K562 (cell line): ENCODE measurements at regions of chr1 and their contacts with region 1.

Region 1: GRCh38 chr1:33025181-33025571 is 11.5 kb downstream of the AK2 start:
- DNase-seq: no peak
- ATAC-seq: no peak
- H3K4me3 ChIP-seq: no peak overlapping the region
- H3K27ac ChIP-seq: no peak overlapping the region
- H3K4me1 ChIP-seq: peaks cover 11 to 19% of the 10 kb centered on the region in 2 experiments
- H3K27me3 ChIP-seq: no peaks in the 10 kb centered on the region
- CTCF ChIP-seq: no peak
- EP300 ChIP-seq: no peak
- POLR2A ChIP-seq: no peak; the same call in 1 of the 2 replicates
- RAD21 ChIP-seq: no peak

Region 2: DNA sequence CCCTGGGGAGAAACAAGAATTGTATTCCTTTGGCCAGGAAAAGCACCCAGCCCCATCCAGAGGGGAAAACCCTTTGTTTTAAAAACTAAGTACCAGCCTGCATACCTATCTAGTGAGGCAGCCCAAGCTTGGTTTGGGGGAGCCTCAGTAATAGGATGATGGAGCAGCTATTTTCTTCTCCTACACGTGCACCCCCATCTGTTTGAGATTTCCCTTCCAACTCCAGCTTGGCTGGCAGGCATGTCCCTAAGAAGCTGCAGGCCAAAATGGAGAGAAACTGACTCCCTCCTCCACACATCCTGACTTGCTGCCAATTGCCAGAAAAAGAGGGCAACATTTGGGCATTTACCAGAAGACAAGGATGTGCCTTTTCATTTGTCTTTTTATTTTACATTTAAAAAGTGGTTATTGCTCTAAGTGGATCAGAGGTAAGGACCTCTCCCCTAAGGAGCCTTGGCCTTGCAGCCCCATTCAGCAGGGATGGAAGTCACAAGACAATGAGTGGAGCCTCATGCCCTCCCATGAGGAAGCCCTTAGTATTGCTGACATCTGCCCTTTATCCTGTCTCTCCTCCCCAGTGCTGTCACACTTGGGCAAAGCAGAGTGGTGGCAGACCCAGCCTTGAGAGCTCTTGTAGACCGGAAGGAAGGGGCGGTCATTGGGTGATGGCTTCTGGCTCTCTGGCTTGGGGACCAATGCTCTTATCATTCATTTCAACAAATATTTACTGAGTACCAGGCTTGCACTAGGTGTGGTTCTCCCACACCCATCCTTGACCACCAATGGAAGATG is 163.1 kb before region 1 on chr1:
- CTCF ChIA-PET with region 1: no interaction called
- POLR2A ChIA-PET with region 1: no interaction called
- in situ Hi-C with region 1: no loop called
- intact Hi-C with region 1: no loop called
- DNase-seq: no peak
- ATAC-seq: no peak
- H3K4me3 ChIP-seq: no peak overlapping the region
- H3K27ac ChIP-seq: no peak overlapping the region
- H3K4me1 ChIP-seq: peaks cover 0 to 3% of the 10 kb centered on the region in 2 experiments; a peak in 1 of 5 replicates
- H3K27me3 ChIP-seq: no peaks in the 10 kb centered on the region
- CTCF ChIP-seq: no peak
- EP300 ChIP-seq: no peak
- POLR2A ChIP-seq: no peak
- RAD21 ChIP-seq: no peak

Region 3: GRCh38 chr1:33014464-33015163 is 10.6 kb before region 1 on chr1:
- CTCF ChIA-PET with region 1: no interaction called
- POLR2A ChIA-PET with region 1: interaction called, 28 read pairs
- in situ Hi-C with region 1: no loop called
- intact Hi-C with region 1: no loop called
- DNase-seq: no peak
- ATAC-seq: peak; percentile 19; the same call in 2 of the 3 replicates
- H3K4me3 ChIP-seq: no peak overlapping the region
- H3K27ac ChIP-seq: no peak overlapping the region
- H3K4me1 ChIP-seq: peaks cover 4 to 21% of the 10 kb centered on the region in 2 experiments
- H3K27me3 ChIP-seq: no peaks in the 10 kb centered on the region
- CTCF ChIP-seq: peak in 1 of 3 experiments; percentile 15; a peak in 2 of 6 replicates
- EP300 ChIP-seq: no peak
- POLR2A ChIP-seq: 0 out of 2 replicates have a peak, but pooled peaks have one; percentile 1
- RAD21 ChIP-seq: peak in 1 of 2 experiments; percentile 28; a peak in 2 of 4 replicates

Region 4: DNA sequence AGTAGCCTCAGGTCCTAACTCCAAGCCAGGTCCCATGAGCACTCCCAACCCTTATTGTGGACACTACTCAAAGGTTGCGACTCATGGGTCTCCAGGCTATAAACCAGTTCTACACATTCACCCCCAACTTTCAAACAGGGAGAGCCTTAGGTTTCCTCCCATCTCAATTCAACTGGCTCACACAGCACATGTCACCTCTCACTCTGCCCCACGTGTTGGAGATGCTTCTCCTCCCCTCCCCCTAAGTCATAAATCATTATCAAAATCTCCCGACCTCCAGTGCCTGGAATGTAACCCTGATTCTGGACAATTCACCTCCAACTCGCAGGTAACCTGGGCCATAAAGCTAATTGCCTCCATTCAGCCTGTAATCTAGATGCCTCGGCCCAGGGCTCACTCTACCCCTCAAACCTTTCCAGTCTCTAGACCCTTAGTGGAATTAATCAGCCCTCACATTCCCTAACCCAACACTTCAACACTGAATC is 10.9 kb after region 1 on chr1:
- CTCF ChIA-PET with region 1: no interaction called
- POLR2A ChIA-PET with region 1: interaction called, 20 read pairs
- in situ Hi-C with region 1: no loop called
- intact Hi-C with region 1: no loop called
- DNase-seq: peak; percentile 49 to 77 (median 60)
- ATAC-seq: peak; percentile 36
- H3K4me3 ChIP-seq: peak overlapping the region; percentile 78
- H3K27ac ChIP-seq: peak overlapping the region; percentile 92
- H3K4me1 ChIP-seq: peaks cover 7 to 24% of the 10 kb centered on the region in 2 experiments; a peak in 4 of 5 replicates
- H3K27me3 ChIP-seq: no peaks in the 10 kb centered on the region
- CTCF ChIP-seq: no peak
- EP300 ChIP-seq: no peak
- POLR2A ChIP-seq: no peak
- RAD21 ChIP-seq: no peak

Region 5: DNA sequence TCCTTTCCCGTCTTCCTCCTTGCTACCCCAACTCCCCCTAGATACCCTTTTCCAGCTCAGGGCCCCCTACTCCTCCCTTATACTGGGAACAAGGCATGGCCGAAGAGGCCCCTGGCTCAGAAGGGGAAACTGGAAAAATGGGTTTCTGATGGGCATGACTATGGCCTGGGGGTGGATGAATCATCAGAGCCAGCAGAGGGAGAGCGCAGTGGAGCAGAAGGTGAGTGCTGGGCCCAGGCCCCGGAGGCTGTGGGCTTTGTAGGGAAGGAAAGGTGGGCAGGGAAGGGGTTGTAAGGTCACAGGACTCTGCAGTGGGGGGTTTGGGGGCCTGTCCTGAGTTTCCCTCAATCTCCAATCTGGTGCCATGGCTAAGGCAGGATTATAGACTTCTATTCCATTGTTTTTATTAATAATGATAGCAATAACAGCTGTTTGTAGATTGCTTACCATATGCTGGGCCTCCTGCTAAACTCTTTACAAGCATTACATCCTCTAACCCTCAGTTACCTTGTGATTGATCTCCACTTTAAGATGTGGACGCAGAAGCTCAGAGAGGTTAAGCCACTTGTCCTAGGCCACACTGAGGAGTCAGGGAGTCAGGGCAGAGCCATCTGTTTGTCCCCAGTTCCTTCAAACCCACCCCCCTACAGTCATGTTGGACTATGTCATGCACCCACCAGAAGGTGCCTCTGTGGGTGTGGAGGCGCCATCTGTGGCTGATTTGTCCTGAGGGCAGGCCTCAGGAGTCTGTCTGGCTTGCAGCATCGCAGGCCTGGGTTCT is 194.9 kb after region 1 on chr1:
- CTCF ChIA-PET with region 1: no interaction called
- POLR2A ChIA-PET with region 1: no interaction called
- in situ Hi-C with region 1: no loop called
- intact Hi-C with region 1: no loop called
- DNase-seq: no peak
- ATAC-seq: no peak
- H3K4me3 ChIP-seq: no peak overlapping the region
- H3K27ac ChIP-seq: no peak overlapping the region
- H3K4me1 ChIP-seq: no peaks in the 10 kb centered on the region
- H3K27me3 ChIP-seq: peaks cover 0 to 7% of the 10 kb centered on the region in 2 experiments; a peak in 1 of 5 replicates
- CTCF ChIP-seq: no peak
- EP300 ChIP-seq: no peak
- POLR2A ChIP-seq: no peak
- RAD21 ChIP-seq: no peak